Ovary (tissue), 10 donors: ENCODE measurements at regions of chr4 and their contacts with region 1.

Region 1: GRCh38 chr4:139890816-139891215 is 225.2 kb downstream of the MGST2 start:
- DNase-seq: no peak
- H3K4me3 ChIP-seq: no peak overlapping the region
- H3K27ac ChIP-seq: no peak overlapping the region
- H3K4me1 ChIP-seq: no peaks in the 10 kb centered on the region
- H3K27me3 ChIP-seq: no peaks in the 10 kb centered on the region
- CTCF ChIP-seq: no peak
- EP300 ChIP-seq: no peak
- POLR2A ChIP-seq: no peak

Region 2: GRCh38 chr4:139386421-139386820 is 504.4 kb before region 1 on chr4:
- intact Hi-C with region 1: no loop called
- DNase-seq: no peak
- H3K4me3 ChIP-seq: no peak overlapping the region
- H3K27ac ChIP-seq: no peak overlapping the region
- H3K4me1 ChIP-seq: no peaks in the 10 kb centered on the region
- H3K27me3 ChIP-seq: no peaks in the 10 kb centered on the region
- CTCF ChIP-seq: no peak
- EP300 ChIP-seq: no peak
- POLR2A ChIP-seq: no peak

Region 3: GRCh38 chr4:139761461-139761860 is 129.4 kb before region 1 on chr4:
- intact Hi-C with region 1: no loop called
- DNase-seq: no peak
- H3K4me3 ChIP-seq: no peak overlapping the region
- H3K27ac ChIP-seq: no peak overlapping the region
- H3K4me1 ChIP-seq: peaks cover 8% of the 10 kb centered on the region
- H3K27me3 ChIP-seq: no peaks in the 10 kb centered on the region
- CTCF ChIP-seq: no peak
- EP300 ChIP-seq: no peak
- POLR2A ChIP-seq: no peak

Region 4: DNA sequence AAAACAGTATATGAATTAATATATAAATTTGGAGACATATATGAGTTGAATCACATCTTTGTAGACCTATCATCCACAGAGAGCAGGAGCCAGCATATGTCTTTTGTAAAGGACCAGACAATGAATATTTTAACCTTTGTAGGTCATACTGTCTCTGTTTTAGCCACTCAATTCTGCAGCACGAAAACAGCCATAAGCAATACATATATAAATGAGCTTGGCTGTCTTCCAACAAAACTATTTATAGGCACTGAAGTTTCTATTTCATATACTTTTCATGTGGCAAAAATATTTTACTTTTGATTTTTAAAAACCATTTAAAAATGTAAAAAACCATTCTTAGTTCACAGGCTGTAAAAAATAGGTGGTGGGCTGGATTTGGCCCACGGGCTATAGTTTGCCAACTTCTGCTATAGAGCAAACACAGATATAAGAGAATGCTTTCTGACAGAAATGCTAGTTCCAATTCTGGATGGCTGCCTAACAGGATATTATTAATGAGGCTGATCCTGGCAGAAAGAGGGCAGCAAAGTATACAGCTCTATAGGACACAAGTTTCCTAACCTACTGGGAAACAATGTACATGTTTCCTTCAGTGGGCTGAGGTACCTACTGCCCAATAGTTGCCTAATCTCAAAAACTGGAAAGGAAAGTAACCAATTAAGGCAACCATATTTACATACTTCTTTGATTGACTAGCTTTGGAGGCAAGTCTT is 736.0 kb after region 1 on chr4:
- intact Hi-C with region 1: loop called in 1 of 4 experiments (anchors 10 kb)
- DNase-seq: no peak
- H3K4me3 ChIP-seq: no peak overlapping the region
- H3K27ac ChIP-seq: no peak overlapping the region
- H3K4me1 ChIP-seq: no peaks in the 10 kb centered on the region
- H3K27me3 ChIP-seq: no peaks in the 10 kb centered on the region
- CTCF ChIP-seq: no peak
- EP300 ChIP-seq: no peak
- POLR2A ChIP-seq: no peak